Mammary epithelial cell (primary cell): ENCODE measurements at regions of chr5 and their contacts with region 1.

Region 1: GRCh38 chr5:149254506-149254905 is 17.2 kb upstream of the AFAP1L1 start:
- DNase-seq: no peak
- H3K4me3 ChIP-seq: no peak overlapping the region
- H3K27ac ChIP-seq: no peak overlapping the region
- H3K4me1 ChIP-seq: peaks cover 5% of the 10 kb centered on the region
- H3K27me3 ChIP-seq: no peaks in the 10 kb centered on the region
- CTCF ChIP-seq: no peak

Region 2: GRCh38 chr5:149235841-149236240 is 18.7 kb before region 1 on chr5:
- CTCF ChIA-PET with region 1: interaction called, 15 read pairs
- dilution Hi-C with region 1: no loop called
- in situ Hi-C with region 1: no loop called
- intact Hi-C with region 1: no loop called
- DNase-seq: no peak
- H3K4me3 ChIP-seq: no peak overlapping the region
- H3K27ac ChIP-seq: no peak overlapping the region
- H3K4me1 ChIP-seq: no peaks in the 10 kb centered on the region
- H3K27me3 ChIP-seq: no peaks in the 10 kb centered on the region
- CTCF ChIP-seq: no peak

Region 3: GRCh38 chr5:149367249-149367971 is 112.9 kb after region 1 on chr5:
- CTCF ChIA-PET with region 1: no interaction called
- dilution Hi-C with region 1: no loop called
- in situ Hi-C with region 1: no loop called
- intact Hi-C with region 1: no loop called
- DNase-seq: peak; percentile 54
- H3K4me3 ChIP-seq: no peak overlapping the region
- H3K27ac ChIP-seq: no peak overlapping the region
- H3K4me1 ChIP-seq: no peaks in the 10 kb centered on the region
- H3K27me3 ChIP-seq: no peaks in the 10 kb centered on the region
- CTCF ChIP-seq: peak; percentile 77 to 85